ENCODE measurements at regions of chr6 and their contacts with region 1.

Region 1: GRCh38 chr6:152701081-152701862 is 3.6 kb downstream of the MYCT1 start:
- DNase-seq: peak; percentile 59
- H3K4me3 ChIP-seq: peak overlapping the region; percentile 57 to 97 (median 88)
- H3K27ac ChIP-seq: peak overlapping the region; percentile 92
- H3K4me1 ChIP-seq: peaks cover 42% of the 10 kb centered on the region
- H3K27me3 ChIP-seq: no peaks in the 10 kb centered on the region
- CTCF ChIP-seq: peak in 1 of 2 donors; percentile 3
- POLR2A ChIP-seq: no peak

Region 2: DNA sequence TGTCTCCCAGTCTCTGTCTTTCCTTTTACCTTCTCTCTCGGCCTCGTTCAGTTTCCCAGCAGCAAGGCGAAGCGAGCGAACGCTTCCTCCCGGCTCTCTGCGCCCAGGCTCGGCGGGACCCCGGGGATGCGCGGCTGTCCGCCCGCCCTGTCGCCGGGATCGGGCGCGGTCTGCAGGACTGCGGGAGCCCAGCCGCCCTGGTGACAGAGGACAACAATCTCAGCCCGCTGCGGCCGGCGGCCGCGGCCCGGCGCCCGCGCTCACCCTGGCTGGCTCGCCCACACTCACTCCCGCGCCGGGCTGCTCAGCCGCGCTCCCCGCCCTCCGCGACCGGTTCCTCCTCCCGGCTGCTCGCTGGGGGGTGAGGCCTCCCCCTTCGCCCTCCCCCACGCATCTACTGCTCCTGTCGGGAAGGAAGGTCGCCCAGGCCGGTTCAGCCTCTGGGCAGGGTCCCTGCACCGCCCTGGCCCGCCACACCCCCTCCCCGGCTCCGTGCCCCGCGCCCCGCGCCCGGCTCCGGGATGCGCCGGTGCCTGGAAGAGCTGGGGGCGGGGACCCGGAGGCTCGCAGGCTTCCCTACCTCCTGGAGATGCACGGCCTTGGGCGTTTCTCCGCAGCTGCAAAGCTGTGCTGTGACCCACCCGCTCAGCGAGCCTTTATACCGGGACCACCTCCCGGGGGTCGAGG is 64.5 kb before region 1 on chr6:
- CTCF ChIA-PET with region 1: interaction called, 3 read pairs
- POLR2A ChIA-PET with region 1: no interaction called
- dilution Hi-C with region 1: no loop called
- intact Hi-C with region 1: loop called (anchors 2 kb)
- DNase-seq: peak; percentile 10
- H3K4me3 ChIP-seq: peak overlapping the region; percentile 36 to 50 (median 40)
- H3K27ac ChIP-seq: no peak overlapping the region
- H3K4me1 ChIP-seq: peaks cover 10% of the 10 kb centered on the region
- H3K27me3 ChIP-seq: peaks cover 4 to 8% of the 10 kb centered on the region in 2 experiments
- CTCF ChIP-seq: no peak
- POLR2A ChIP-seq: no peak

Region 3: GRCh38 chr6:152669895-152670294 is 31.4 kb before region 1 on chr6:
- CTCF ChIA-PET with region 1: interaction called, 29 read pairs
- POLR2A ChIA-PET with region 1: interaction called, 25 read pairs
- dilution Hi-C with region 1: no loop called
- intact Hi-C with region 1: loop called (anchors 1 kb)
- DNase-seq: peak; percentile 67
- H3K4me3 ChIP-seq: no peak overlapping the region
- H3K27ac ChIP-seq: no peak overlapping the region
- H3K4me1 ChIP-seq: peaks cover 44% of the 10 kb centered on the region
- H3K27me3 ChIP-seq: no peaks in the 10 kb centered on the region
- CTCF ChIP-seq: peak; percentile 8 to 22
- POLR2A ChIP-seq: no peak

Region 4: GRCh38 chr6:152982768-152983636 is 281.7 kb after region 1 on chr6 and contains the start of gene FBXO5:
- CTCF ChIA-PET with region 1: no interaction called
- POLR2A ChIA-PET with region 1: interaction called, 3 read pairs
- dilution Hi-C with region 1: no loop called
- intact Hi-C with region 1: loop called (anchors 1 kb)
- DNase-seq: peak; percentile 97
- H3K4me3 ChIP-seq: peak within 1 kb of the TSS; percentile 76 to 99 (median 97)
- H3K27ac ChIP-seq: peak within 1 kb of the TSS; percentile 86
- H3K4me1 ChIP-seq: peaks cover 41% of the 10 kb centered on the region
- H3K27me3 ChIP-seq: no peaks in the 10 kb centered on the region
- CTCF ChIP-seq: no peak
- POLR2A ChIP-seq: peak; percentile 81
- total RNA-seq, gene FBXO5: 27.1 and 28.1 TPM in 2 replicates

Region 5: GRCh38 chr6:153032255-153032882 is 331.1 kb after region 1 on chr6:
- CTCF ChIA-PET with region 1: no interaction called
- POLR2A ChIA-PET with region 1: no interaction called
- dilution Hi-C with region 1: no loop called
- intact Hi-C with region 1: no loop called
- DNase-seq: peak; percentile 66
- H3K4me3 ChIP-seq: no peak overlapping the region
- H3K27ac ChIP-seq: no peak overlapping the region
- H3K4me1 ChIP-seq: peaks cover 15% of the 10 kb centered on the region
- H3K27me3 ChIP-seq: no peaks in the 10 kb centered on the region
- CTCF ChIP-seq: peak in 1 of 2 donors; percentile 12
- POLR2A ChIP-seq: no peak